ENCODE measurements at regions of chr3 and their contacts with region 1.

Region 1: GRCh38 chr3:111859974-111860859 is 1.2 kb downstream of the PHLDB2 start:
- DNase-seq: peak; percentile 88
- H3K4me3 ChIP-seq: peak overlapping the region; percentile 75 to 95 (median 93)
- H3K27ac ChIP-seq: peak overlapping the region; percentile 98
- H3K4me1 ChIP-seq: peaks cover 46% of the 10 kb centered on the region
- H3K27me3 ChIP-seq: no peaks in the 10 kb centered on the region
- CTCF ChIP-seq: peak; percentile 32 to 41
- POLR2A ChIP-seq: peak; percentile 19

Region 2: DNA sequence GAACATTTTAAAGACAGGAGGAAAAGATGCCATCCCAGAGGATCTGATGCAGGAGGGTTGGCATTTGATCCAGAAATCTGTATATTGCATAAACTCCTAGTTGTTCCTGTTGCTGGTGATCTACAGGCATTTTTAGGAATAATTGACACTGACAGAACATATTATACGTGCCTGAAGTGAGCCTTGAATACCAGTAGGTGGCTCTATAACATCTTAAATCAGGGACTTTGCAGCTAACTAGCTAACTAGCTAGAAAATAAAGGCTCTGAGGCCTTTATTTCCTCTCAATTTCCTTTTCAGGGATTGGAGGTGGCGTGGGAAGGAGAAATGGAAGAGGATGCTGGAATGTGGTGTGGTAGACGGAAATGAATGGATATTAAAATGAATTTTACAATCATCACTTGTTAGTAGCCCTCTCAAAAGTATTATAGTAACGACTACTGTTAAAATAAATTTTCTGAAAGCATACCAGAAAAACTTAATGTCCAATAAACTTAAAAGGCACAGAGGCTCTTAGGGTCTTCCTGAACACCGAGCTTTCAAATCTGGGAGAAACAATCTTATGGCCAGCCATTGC is 191.2 kb before region 1 on chr3:
- CTCF ChIA-PET with region 1: interaction called, 14 read pairs
- POLR2A ChIA-PET with region 1: no interaction called
- dilution Hi-C with region 1: no loop called
- intact Hi-C with region 1: loop called (anchors 2 kb)
- DNase-seq: peak; percentile 63
- H3K4me3 ChIP-seq: no peak overlapping the region
- H3K27ac ChIP-seq: peak overlapping the region; percentile 29
- H3K4me1 ChIP-seq: peaks cover 31% of the 10 kb centered on the region
- H3K27me3 ChIP-seq: no peaks in the 10 kb centered on the region
- CTCF ChIP-seq: peak; percentile 61
- POLR2A ChIP-seq: no peak

Region 3: GRCh38 chr3:111747490-111747889 is 112.7 kb before region 1 on chr3:
- CTCF ChIA-PET with region 1: interaction called, 11 read pairs
- POLR2A ChIA-PET with region 1: no interaction called
- dilution Hi-C with region 1: loop called (anchors 25 kb)
- intact Hi-C with region 1: loop called (anchors 1 kb)
- DNase-seq: peak; percentile 40
- H3K4me3 ChIP-seq: no peak overlapping the region
- H3K27ac ChIP-seq: peak overlapping the region; percentile 70
- H3K4me1 ChIP-seq: peaks cover 14% of the 10 kb centered on the region
- H3K27me3 ChIP-seq: no peaks in the 10 kb centered on the region
- CTCF ChIP-seq: no peak
- POLR2A ChIP-seq: no peak

Region 4: DNA sequence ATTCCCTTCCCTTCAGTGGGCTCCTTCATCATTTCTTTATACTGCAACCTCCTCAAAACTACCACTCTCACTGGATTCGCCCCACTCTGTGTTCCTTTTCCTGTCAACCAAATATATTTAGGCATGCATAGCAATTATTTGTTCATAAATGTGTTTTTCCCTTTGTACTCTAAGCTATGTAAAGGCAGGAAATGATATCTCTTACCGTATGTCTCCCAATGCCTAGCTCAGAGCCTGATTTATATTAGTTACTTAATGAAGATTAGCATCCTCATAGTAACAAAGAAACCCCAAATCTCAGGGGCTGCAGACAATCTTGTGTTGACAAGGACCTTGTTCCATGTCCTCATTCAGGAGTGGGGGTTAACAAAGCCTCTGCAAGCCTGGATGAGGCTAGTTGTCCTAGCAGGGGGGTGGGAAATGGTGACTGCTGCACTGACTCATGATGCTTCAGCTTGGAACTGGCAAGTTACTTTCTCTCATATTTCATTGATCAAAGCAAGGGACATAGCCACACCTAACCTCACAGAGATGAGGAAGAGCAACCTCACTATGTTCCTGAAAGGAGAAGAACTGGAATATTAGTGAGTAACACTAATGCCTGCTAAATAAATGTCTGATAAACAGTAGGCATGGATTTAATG is 14.1 kb after region 1 on chr3:
- CTCF ChIA-PET with region 1: interaction called, 17 read pairs
- POLR2A ChIA-PET with region 1: interaction called, 3 read pairs
- dilution Hi-C with region 1: no loop called
- intact Hi-C with region 1: no loop called
- DNase-seq: peak; percentile 47
- H3K4me3 ChIP-seq: no peak overlapping the region
- H3K27ac ChIP-seq: peak overlapping the region; percentile 27
- H3K4me1 ChIP-seq: peaks cover 15% of the 10 kb centered on the region
- H3K27me3 ChIP-seq: no peaks in the 10 kb centered on the region
- CTCF ChIP-seq: no peak
- POLR2A ChIP-seq: no peak

Region 5: DNA sequence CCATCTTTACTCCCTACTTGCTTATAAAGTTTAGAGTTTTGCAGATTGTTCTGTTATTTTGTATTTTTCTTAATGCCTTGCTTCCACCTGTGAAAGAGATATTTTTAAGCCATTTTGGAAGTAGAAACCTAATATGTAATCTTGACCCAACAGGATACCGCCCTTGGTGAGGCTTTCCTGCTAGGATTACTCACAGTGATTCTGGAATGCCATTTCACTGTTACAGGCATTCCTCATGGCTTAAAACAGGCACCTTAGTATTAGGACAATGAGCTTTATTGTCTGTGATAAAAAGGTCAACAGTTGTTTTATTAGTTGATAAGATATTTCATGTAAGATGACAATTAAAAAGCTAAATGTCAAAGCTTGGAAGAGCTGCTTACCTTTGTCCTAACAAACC is 57.1 kb after region 1 on chr3:
- CTCF ChIA-PET with region 1: interaction called, 7 read pairs
- POLR2A ChIA-PET with region 1: interaction called, 5 read pairs
- dilution Hi-C with region 1: no loop called
- intact Hi-C with region 1: loop called (anchors 2 kb)
- DNase-seq: peak; percentile 88
- H3K4me3 ChIP-seq: peak overlapping the region in 1 of 3 experiments; percentile 17
- H3K27ac ChIP-seq: peak overlapping the region; percentile 91
- H3K4me1 ChIP-seq: peaks cover 35% of the 10 kb centered on the region
- H3K27me3 ChIP-seq: no peaks in the 10 kb centered on the region
- CTCF ChIP-seq: no peak
- POLR2A ChIP-seq: peak; percentile 25

Region 6: DNA sequence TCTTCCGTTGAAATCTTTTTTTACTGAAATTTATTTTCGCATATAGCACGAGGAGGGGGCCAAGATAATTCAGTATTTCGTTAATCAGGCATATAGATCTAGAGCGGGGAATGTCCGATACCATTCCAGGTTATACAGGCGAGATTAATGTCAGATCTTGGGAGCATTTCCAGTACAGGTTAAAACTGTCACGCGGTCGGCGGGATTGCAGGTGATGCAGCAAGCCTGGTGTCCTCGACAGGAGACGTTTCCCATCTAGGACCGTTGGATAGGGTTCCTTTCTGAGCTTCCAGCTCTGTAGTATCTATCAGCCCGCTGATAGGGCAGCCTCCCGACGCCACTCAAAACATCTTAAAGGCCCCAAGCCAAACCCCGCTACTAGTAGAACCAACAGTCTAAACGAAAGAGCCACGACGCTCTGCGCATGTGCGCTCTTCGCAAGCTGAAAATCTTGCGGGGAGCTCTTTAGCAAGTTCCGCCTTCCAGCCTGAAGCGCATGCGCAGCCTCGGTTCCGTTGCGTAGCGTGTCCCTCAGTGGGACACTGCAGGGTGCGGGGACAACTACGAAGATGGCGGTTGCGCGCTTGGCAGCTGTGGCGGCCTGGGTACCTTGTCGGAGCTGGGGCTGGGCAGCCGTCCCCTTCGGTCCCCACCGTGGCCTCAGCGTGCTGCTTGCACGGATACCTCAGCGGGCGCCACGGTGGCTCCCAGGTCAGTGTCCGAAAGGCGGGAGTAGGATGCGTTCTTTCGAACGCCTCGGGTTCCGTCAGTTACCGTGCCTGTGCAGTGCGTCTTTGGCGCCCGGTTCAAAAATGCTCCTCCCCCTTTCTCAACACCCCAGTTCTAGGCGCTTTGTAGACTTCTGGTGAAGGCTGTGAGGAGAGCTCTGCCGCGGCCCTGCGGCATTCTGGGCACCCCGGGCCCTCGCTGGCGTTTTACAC is 118.5 kb after region 1 on chr3 and contains the start of gene ABHD10:
- CTCF ChIA-PET with region 1: interaction called, 22 read pairs
- POLR2A ChIA-PET with region 1: interaction called, 6 read pairs
- dilution Hi-C with region 1: no loop called
- intact Hi-C with region 1: no loop called
- DNase-seq: peak; percentile 99
- H3K4me3 ChIP-seq: peak within 1 kb of the TSS; percentile 80 to 96 (median 96)
- H3K27ac ChIP-seq: peak within 1 kb of the TSS; percentile 33
- H3K4me1 ChIP-seq: peaks cover 21% of the 10 kb centered on the region
- H3K27me3 ChIP-seq: no peaks in the 10 kb centered on the region
- CTCF ChIP-seq: no peak
- POLR2A ChIP-seq: peak; percentile 90
- total RNA-seq, gene ABHD10: 26.2 and 37.0 TPM in 2 replicates

Measured in endothelial cell of umbilical vein (primary cell).